Breast epithelium (tissue), 4 donors: ENCODE measurements at regions of chr17 and their contacts with region 1.

Region 1: GRCh38 chr17:58362368-58363014 is 10.5 kb upstream of the SUPT4H1 start:
- DNase-seq: no peak
- H3K4me3 ChIP-seq: no peak overlapping the region
- H3K27ac ChIP-seq: no peak overlapping the region
- H3K4me1 ChIP-seq: no peaks in the 10 kb centered on the region
- H3K27me3 ChIP-seq: no peaks in the 10 kb centered on the region
- CTCF ChIP-seq: no peak
- POLR2A ChIP-seq: no peak

Region 2: DNA sequence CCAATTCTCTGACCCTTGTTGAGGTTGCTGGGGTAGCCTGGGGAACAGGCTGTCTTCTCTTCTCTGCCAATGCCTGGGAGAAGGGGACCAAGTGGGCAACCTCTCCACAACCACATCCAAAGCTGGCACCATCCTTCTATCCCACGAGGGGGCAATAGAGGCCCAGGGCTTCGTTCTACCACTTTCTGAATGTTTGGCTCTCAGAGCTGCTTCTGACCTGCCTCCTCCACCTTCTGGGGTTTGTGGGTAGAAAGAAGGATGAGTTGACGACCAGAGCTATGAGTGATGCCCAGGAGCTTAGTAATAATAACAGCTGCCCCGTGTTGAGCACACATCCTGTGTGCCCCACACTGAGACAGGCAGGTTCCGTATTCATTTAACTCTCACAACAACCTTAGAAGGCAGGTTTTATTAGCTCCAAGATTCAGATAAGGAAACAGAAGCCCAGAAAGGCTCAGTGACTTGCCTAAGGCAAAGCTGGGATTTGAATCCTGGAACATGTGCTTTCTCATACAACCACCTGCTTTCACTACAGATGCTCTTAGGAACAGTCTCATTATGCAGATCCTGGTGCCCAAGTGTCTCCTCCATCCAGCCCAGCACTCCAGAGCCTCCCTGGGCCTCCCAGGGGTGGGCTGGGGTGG is 44.9 kb before region 1 on chr17:
- intact Hi-C with region 1: loop called (anchors 1 kb)
- DNase-seq: peak; percentile 45 to 54
- H3K4me3 ChIP-seq: no peak overlapping the region
- H3K27ac ChIP-seq: peak overlapping the region in 1 of 2 donors; percentile 19
- H3K4me1 ChIP-seq: no peaks in the 10 kb centered on the region
- H3K27me3 ChIP-seq: no peaks in the 10 kb centered on the region
- CTCF ChIP-seq: peak in 2 of 3 donors; percentile 46 to 67
- POLR2A ChIP-seq: no peak